Activated T-helper 2 cell treated with anti-CD3 and anti-CD28 coated beads, Interferon-gamma antibody, Interleukin-2, Interleukin-4, amounts not matched to agents 10 μg/mL and 5 μg/mL and 100 μg/mL, durations not matched to agents 14 hours and 24 hours and 36 hours (primary cell): ENCODE measurements at regions of chr7 and their contacts with region 1.

Region 1: GRCh38 chr7:48109848-48110663 is 21.0 kb downstream of the UPP1 start:
- DNase-seq: peak; percentile 75
- H3K4me3 Mint-ChIP-seq: no peak overlapping the region
- H3K27ac Mint-ChIP-seq: no peak overlapping the region
- H3K4me1 Mint-ChIP-seq: peaks cover 9% of the 10 kb centered on the region
- H3K27me3 Mint-ChIP-seq: no peaks in the 10 kb centered on the region

Region 2: DNA sequence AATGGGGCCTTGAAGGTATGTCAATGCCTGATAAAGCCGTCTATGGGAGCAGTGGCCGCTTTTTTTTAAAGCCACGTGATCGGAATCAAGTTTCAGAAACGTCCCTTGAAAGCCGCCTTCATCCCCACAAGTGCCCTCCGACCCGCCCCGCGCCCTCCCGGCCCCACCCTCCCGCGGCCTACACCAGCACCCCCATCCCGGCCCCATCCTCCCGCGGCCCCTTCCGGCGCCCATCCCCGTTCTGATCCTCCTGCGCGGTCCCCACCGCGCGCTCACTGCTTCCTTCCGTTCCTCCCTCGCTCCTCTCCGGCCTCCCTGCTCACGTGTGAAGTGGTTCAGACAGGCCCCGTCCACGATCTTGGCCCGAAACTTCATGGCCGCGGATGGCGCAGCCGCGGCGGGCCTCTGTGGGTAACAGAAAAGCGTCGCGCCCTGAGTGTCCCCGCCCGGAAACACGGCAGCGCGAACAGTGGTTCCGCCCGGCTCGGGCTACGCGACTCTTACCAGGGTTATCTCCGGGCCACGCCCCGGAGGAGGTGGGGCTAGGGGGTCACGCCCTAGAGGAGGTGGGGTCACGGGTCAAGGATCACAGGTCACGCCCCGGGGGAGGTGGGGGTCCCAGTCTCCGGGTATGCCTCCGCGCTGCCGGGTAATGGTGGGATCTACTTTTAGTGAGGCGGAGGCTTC is 130.8 kb before region 1 on chr7 and contains the start of gene HUS1:
- intact Hi-C with region 1: loop called (anchors 1 kb)
- DNase-seq: peak; percentile 90
- H3K4me3 Mint-ChIP-seq: peak within 1 kb of the TSS; percentile 90
- H3K27ac Mint-ChIP-seq: peak within 1 kb of the TSS; percentile 95
- H3K4me1 Mint-ChIP-seq: peaks cover 14% of the 10 kb centered on the region
- H3K27me3 Mint-ChIP-seq: peaks cover 1% of the 10 kb centered on the region
- total RNA-seq, gene HUS1: 33.8 and 36.6 TPM in 2 replicates

Region 3: GRCh38 chr7:48097521-48098231 is 12.4 kb before region 1 on chr7:
- intact Hi-C with region 1: loop called (anchors 1 kb)
- DNase-seq: peak; percentile 38
- H3K4me3 Mint-ChIP-seq: peak overlapping the region; percentile 42
- H3K27ac Mint-ChIP-seq: peak overlapping the region; percentile 91
- H3K4me1 Mint-ChIP-seq: peaks cover 59% of the 10 kb centered on the region
- H3K27me3 Mint-ChIP-seq: no peaks in the 10 kb centered on the region